ENCODE measurements at regions of chr20 and their contacts with region 1.

Region 1: GRCh38 chr20:49186535-49187329 is 1.4 kb downstream of the STAU1 start:
- DNase-seq: peak; percentile 62
- ATAC-seq: peak; percentile 5; the same call in 1 of the 2 replicates
- H3K4me3 ChIP-seq: peak overlapping the region; percentile 75
- H3K27ac ChIP-seq: peak overlapping the region; percentile 59
- H3K4me1 ChIP-seq: no peaks in the 10 kb centered on the region
- H3K27me3 ChIP-seq: no peaks in the 10 kb centered on the region
- CTCF ChIP-seq: no peak
- POLR2A ChIP-seq: no peak
- RAD21 ChIP-seq: no peak

Region 2: GRCh38 chr20:48846498-48847485 is 339.9 kb before region 1 on chr20:
- CTCF ChIA-PET with region 1: no interaction called
- POLR2A ChIA-PET with region 1: no interaction called
- dilution Hi-C with region 1: no loop called
- in situ Hi-C with region 1: no loop called
- intact Hi-C with region 1: no loop called
- DNase-seq: no peak
- ATAC-seq: no peak
- H3K4me3 ChIP-seq: no peak overlapping the region
- H3K27ac ChIP-seq: no peak overlapping the region
- H3K4me1 ChIP-seq: no peaks in the 10 kb centered on the region
- H3K27me3 ChIP-seq: peaks cover 4% of the 10 kb centered on the region; the same call in 1 of the 2 replicates
- CTCF ChIP-seq: no peak
- POLR2A ChIP-seq: no peak
- RAD21 ChIP-seq: no peak

Region 3: DNA sequence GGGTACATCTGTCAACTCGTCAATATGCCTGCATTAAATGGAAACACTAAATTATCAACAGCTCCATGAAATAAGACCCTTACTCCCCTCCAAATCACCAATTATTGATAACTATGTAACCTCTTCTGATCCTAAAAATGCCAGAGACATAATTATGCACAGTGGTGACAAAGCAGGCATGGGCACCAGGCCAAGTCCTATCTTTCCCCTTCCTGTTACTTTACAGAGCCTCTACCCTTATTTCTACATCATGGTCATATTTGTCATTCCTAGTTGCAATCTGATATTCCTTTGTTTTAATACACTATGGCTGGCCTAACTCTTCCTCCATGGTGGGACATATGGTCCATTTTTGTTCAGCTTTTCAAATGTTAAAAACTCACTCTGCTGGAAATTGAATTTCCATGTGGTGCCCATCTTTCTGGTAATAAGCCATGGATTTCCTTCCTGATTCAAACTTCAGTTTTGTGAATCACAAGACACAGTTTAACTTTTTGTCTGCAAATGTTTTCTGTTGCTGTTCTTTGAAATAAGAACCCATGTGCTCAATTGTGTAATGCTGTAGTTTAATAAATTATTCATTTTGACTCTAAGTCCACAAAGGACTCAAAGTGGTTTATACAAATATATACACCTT is 307.0 kb before region 1 on chr20:
- CTCF ChIA-PET with region 1: no interaction called
- POLR2A ChIA-PET with region 1: no interaction called
- dilution Hi-C with region 1: no loop called
- in situ Hi-C with region 1: no loop called
- intact Hi-C with region 1: no loop called
- DNase-seq: no peak
- ATAC-seq: no peak
- H3K4me3 ChIP-seq: no peak overlapping the region
- H3K27ac ChIP-seq: no peak overlapping the region
- H3K4me1 ChIP-seq: no peaks in the 10 kb centered on the region
- H3K27me3 ChIP-seq: peaks cover 10% of the 10 kb centered on the region
- CTCF ChIP-seq: no peak
- POLR2A ChIP-seq: no peak
- RAD21 ChIP-seq: no peak

Region 4: DNA sequence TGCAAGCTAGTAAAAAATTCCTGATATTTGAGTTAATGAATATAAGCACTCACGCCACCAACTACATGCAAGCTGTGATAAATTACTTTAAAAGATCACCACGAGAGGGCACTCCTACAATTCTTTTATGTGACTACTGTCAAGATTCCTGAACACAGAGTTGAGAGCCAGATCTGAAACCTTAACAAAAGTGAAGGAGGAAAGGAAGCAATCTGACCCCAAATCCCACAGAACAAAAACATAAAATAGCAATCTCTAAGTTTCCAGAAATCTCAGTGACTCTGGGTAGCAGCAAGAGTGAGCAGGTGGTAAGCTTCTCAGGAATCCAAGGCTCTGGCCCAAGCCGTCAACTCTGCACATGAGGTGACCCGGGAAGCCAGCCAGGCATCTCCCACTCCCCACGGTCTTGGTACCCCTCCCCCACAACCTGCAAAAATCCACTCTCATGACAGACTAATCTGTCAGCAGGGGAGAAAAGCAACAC is 53.7 kb before region 1 on chr20:
- CTCF ChIA-PET with region 1: interaction called, 3 read pairs
- POLR2A ChIA-PET with region 1: no interaction called
- dilution Hi-C with region 1: no loop called
- in situ Hi-C with region 1: no loop called
- intact Hi-C with region 1: loop called (anchors 10 kb)
- DNase-seq: peak; percentile 79
- ATAC-seq: peak; percentile 88
- H3K4me3 ChIP-seq: no peak overlapping the region
- H3K27ac ChIP-seq: no peak overlapping the region
- H3K4me1 ChIP-seq: peaks cover 5% of the 10 kb centered on the region; the same call in 1 of the 2 replicates
- H3K27me3 ChIP-seq: no peaks in the 10 kb centered on the region
- CTCF ChIP-seq: peak; percentile 68
- POLR2A ChIP-seq: no peak
- RAD21 ChIP-seq: peak; percentile 67

Region 5: GRCh38 chr20:49166534-49167449 is 19.9 kb before region 1 on chr20:
- CTCF ChIA-PET with region 1: interaction called, 3 read pairs
- POLR2A ChIA-PET with region 1: no interaction called
- dilution Hi-C with region 1: no loop called
- in situ Hi-C with region 1: no loop called
- intact Hi-C with region 1: loop called (anchors 2 kb)
- DNase-seq: no peak
- ATAC-seq: no peak
- H3K4me3 ChIP-seq: no peak overlapping the region
- H3K27ac ChIP-seq: no peak overlapping the region
- H3K4me1 ChIP-seq: peaks cover 4% of the 10 kb centered on the region
- H3K27me3 ChIP-seq: no peaks in the 10 kb centered on the region
- CTCF ChIP-seq: no peak
- POLR2A ChIP-seq: no peak
- RAD21 ChIP-seq: no peak

Region 6: GRCh38 chr20:49219089-49219923 is 32.6 kb after region 1 on chr20 and contains the start of gene DDX27:
- CTCF ChIA-PET with region 1: interaction called, 4 read pairs
- POLR2A ChIA-PET with region 1: no interaction called
- dilution Hi-C with region 1: no loop called
- in situ Hi-C with region 1: no loop called
- intact Hi-C with region 1: loop called (anchors 1 kb)
- DNase-seq: peak; percentile 99
- ATAC-seq: peak; percentile 90
- H3K4me3 ChIP-seq: peak within 1 kb of the TSS; percentile 76
- H3K27ac ChIP-seq: peak within 1 kb of the TSS; percentile 85
- H3K4me1 ChIP-seq: peaks cover 4% of the 10 kb centered on the region; the same call in 1 of the 2 replicates
- H3K27me3 ChIP-seq: no peaks in the 10 kb centered on the region
- CTCF ChIP-seq: no peak
- POLR2A ChIP-seq: peak; percentile 86
- RAD21 ChIP-seq: no peak
- total RNA-seq, gene DDX27: 28.3 and 33.2 TPM in 2 replicates

Region 7: DNA sequence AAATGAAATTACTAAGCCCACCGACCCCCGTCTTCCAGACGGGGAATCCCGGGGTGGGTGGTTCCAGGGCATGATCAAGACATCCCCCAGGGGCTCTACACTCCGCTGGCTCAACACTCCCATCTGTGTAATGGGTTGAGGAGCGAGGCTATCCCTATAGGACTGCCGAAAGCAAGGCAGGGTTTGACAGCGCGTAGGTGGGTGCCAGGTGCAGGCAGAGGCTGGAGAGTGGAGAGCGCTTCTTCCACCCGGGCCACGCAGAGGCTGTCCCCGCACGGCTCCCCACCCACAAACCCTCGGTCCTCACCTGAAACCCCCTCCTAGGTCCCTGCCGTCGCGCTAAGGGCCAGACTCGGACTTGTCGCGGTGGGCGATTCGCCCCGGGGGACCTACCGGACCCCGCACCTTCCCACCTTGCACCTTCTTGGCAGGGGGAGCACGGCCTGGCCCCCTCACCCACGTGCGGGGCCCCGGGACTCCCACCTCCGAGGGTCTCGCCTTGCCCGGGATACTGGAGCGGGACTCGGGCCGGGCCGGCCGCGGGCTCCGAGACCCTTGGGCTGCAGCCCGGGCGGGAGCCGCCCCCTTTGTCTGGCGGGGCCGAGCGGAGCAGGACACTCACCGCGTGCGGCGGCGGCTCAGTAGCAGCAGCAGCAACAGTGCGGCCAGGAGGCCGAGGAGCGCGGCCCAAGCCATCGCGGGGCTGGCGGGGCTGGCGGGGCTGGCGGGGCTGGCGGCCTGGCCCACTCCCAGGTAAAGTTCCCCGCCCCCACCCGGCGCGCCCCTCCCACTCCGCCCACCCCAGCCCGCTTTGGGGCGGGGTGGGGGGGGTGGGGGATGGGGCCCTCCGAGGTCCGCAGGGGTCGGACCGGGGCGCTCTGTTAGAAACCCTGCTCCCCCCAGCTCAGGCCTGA is 380.9 kb after region 1 on chr20 and contains the start of gene PTGIS:
- CTCF ChIA-PET with region 1: no interaction called
- POLR2A ChIA-PET with region 1: no interaction called
- dilution Hi-C with region 1: no loop called
- in situ Hi-C with region 1: no loop called
- intact Hi-C with region 1: loop called (anchors 5 kb)
- DNase-seq: no peak
- ATAC-seq: peak; percentile 79
- H3K4me3 ChIP-seq: peak within 1 kb of the TSS; percentile 46
- H3K27ac ChIP-seq: peak within 1 kb of the TSS; percentile 37
- H3K4me1 ChIP-seq: peaks cover 18% of the 10 kb centered on the region; the same call in 1 of the 2 replicates
- H3K27me3 ChIP-seq: peaks cover 21% of the 10 kb centered on the region
- CTCF ChIP-seq: no peak
- POLR2A ChIP-seq: no peak
- RAD21 ChIP-seq: no peak
- total RNA-seq, gene PTGIS: 1.1 and 1.6 TPM in 2 replicates